Common myeloid progenitor, CD34-positive (primary cell): ENCODE measurements at regions of chr2 and their contacts with region 1.

Region 1: GRCh38 chr2:219087361-219087760 is 26.6 kb upstream of the IHH start:
- DNase-seq: no peak
- H3K4me3 ChIP-seq: no peak overlapping the region
- H3K27ac ChIP-seq: no peak overlapping the region
- H3K4me1 ChIP-seq: peaks cover 0 to 29% (median 9%) of the 10 kb centered on the region in 4 experiments
- H3K27me3 ChIP-seq: no peaks in the 10 kb centered on the region

Region 2: DNA sequence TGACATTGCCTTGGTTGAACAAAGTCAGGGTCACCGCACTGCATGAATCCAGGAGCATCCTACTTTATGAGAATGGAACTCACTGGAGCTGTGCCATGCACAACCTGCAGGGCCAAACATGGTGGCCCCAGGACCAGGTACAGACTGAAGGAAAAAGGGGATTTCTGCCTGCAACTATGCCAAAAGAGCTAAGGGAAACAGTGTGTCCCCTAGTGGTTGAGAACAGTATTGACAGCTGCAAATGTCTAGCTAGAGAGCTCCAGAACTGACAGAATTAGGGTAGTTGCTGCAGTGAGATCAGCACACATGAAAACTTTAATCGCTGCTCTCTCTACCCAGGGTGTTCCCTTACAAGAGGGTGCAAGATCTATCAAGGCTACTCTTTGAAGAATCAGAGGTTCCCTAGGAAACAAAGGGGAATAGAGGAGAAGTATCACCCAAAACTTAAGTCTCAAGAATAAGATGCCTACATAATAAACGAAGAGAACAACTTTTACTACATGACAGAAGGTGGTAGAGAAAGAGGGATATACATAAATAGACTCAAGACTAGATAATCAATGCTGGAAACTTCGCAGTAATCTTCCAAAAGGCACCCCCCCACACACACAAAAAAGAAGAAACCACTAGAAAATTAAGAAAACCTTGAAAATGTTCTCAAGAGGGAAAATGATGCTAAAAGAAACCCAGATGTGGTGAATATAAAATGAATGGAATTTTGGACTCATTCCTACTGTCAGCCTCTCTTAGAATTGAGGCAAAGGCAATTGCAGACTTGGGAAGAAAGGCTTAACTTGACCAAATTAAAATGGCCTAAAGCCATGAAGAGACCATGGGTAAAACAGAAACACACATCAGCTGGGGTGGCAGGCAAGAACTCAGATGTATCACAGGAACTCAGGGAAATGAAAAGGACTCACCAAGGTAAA is 17.0 kb after region 1 on chr2:
- CTCF ChIA-PET with region 1: interaction called, 11 read pairs
- POLR2A ChIA-PET with region 1: interaction called, 3 read pairs
- DNase-seq: peak; percentile 48 to 61 (median 59)
- H3K4me3 ChIP-seq: no peak overlapping the region
- H3K27ac ChIP-seq: no peak overlapping the region
- H3K4me1 ChIP-seq: peaks cover 4 to 10% (median 4%) of the 10 kb centered on the region in 4 experiments
- H3K27me3 ChIP-seq: no peaks in the 10 kb centered on the region